Right ventricle myocardium inferior (tissue), 1 donor: ENCODE measurements at regions of chr1 and their contacts with region 1.

Region 1: GRCh38 chr1:205907794-205908193 is 35.5 kb downstream of the SLC26A9 start:
- DNase-seq: no peak
- ATAC-seq: no peak

Region 2: DNA sequence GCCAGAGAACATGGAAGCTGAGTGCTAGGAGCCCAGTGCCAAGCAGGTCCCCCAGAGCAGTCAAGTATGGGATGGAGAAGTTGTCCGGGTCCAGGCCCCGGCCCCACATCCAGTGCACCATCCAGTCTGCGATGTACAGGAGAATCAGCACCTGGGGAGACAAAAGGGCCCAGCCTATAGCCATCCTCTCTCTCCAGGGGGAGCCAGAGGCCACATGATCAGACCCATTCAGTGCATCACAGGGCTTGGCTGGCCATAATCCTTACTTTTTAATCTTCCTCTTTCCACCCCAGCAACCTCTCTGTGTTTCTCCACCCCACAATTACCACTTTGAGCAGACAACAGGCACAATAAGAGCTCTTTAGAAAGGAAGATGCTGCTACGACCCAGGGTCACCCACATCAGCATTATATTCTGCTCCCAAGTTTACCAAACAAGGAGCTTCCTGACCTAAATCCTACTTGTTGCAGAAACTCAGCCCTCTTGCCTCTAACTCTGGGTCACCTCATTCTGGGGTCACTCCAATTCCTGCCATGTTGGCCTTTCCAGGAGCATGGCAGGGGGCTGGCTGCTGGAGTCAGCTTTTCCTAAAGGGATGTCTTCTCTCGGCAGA is 116.1 kb before region 1 on chr1:
- intact Hi-C with region 1: loop called (anchors 2 kb)
- DNase-seq: no peak
- ATAC-seq: peak; percentile 58

Region 3: DNA sequence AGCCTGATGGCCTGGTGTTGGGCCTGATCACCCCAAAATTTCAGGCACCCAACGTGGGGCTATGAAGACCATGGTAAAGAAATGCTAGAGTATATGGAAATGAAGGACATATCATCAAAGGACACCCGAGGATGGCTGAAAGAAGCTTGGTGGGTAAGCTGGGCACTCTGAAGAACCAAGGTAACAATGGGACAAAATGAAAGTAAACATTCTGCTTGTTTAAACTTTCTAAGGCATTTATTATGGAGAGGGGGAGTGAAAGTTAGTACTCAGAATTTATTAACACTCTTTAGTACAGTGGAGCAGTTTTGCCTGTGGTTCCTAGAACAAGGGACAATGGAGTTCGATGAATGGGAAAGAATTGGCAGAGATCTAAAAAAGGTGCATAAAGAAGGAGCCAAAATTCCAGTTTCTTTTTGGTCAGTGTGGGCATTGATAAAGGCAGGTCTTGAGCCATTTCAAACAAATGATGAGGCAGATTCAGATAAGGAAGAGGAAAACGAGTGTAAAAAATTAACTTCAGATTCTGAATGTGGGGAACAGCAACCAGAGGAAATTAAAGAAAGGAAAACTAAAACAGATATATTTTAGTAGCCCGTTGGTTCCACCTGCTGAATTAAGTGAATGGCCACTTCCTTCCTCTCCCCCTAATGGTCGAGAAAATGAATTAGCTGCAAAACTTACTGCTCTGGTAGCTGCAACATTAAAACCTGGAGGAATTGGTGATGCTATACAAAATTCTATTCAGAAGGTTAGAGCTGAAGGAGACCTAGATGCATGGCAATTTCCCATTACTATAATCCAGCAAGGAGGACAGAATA is 49.4 kb before region 1 on chr1:
- intact Hi-C with region 1: no loop called
- DNase-seq: no peak
- ATAC-seq: no peak